GM10248 (cell line): ENCODE measurements at regions of chr15 and their contacts with region 1.

Region 1: DNA sequence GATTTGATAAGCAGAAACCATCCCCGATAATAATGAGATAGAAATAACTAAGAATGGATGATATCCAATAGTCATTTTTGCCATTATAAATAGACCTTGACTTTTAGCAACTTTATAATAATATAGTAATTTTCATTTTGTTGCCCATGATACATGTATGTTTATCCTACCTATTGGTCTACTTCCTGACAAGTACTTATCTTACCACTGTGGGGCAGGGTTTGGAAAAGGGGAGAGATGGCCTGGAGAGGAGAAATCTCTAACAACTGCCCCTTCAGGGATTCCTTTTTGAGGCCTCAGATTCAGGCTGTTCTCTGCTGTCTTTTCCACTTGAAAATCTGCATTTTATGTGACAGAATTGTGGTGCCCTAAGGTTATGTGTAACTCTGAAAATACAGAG is 42.2 kb downstream of the FAM98B start:
- DNase-seq: no peak
- CTCF ChIP-seq: no peak

Region 2: GRCh38 chr15:38479266-38479665 is 16.9 kb before region 1 on chr15:
- CTCF ChIA-PET with region 1: no interaction called
- POLR2A ChIA-PET with region 1: no interaction called
- DNase-seq: no peak
- CTCF ChIP-seq: no peak

Region 3: DNA sequence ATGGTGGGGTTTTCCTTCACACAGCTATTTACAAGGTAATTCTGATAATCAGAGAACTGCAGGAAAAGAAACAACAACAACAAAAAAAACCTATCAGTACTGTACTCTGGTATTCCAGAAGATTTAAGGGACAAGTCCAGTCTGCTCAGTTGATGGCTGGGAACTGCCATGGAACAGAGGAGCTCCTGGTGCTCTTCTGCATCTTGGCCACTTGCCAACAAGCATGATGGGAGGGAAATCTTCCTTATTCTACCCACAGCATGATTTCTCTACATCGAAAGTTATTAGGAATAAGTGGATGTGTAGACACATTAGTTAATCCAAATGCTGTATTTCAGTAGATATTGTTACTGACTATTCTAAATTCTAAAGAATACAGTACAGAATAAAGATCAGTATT is 16.8 kb after region 1 on chr15:
- CTCF ChIA-PET with region 1: interaction called, 17 read pairs
- POLR2A ChIA-PET with region 1: no interaction called
- DNase-seq: no peak
- CTCF ChIP-seq: no peak

Region 4: DNA sequence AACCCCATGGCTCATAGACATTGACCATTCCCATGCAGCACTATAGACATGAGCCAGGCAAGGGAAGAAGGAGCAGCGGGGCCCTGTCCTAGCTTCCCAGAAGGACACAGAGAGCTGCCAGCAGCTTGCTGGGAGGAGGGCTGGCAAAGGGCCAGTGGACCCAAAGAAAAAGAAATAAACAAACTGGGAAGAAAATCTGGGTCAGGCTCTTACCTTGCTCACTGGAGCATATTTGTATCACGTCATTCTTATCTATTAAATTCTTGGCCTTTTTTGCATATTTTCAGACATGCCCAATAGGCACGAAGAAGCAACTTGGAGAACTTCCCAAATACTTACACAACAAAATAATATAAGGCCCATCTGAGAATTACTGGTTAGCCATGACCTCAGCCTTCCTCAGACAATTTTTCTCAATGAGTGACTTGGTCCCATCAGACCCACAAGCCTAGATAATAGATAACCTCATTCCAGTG is 40.1 kb after region 1 on chr15:
- CTCF ChIA-PET with region 1: no interaction called
- POLR2A ChIA-PET with region 1: no interaction called
- DNase-seq: no peak
- CTCF ChIP-seq: no peak

Region 5: DNA sequence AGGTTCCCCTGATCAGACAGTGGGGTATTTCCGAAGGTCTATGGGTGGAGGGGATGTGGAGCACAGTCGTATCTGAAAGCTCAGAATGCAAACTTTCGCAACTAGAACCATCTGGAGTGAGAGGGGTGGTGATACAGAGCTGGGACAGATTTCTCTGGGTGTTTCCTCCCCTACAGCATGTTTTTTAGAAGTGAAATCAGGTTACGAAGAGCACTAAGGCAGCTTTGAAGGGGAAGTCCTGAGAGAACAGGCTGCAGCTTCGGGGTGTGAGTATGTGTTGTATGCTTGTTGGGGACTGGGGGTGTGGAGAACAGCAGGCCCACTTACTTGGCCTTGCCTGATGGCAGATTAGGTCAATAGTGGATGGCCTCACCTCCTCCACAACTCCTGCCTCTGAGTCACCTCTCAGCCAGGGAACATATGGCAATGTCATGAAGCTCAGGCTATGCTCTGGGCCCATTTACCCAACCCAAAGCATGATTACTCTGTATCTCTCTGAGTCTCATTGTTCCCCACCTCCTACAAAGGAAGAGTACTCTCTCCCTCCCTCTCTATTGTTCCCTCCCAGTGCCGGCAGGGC is 175.6 kb after region 1 on chr15:
- CTCF ChIA-PET with region 1: no interaction called
- POLR2A ChIA-PET with region 1: no interaction called
- DNase-seq: no peak
- CTCF ChIP-seq: peak; percentile 0